ENCODE measurements at regions of chr7 and their contacts with region 1.

Region 1: GRCh38 chr7:100342765-100343164 is 15.2 kb upstream of the PILRB start:
- DNase-seq: peak in 1 of 5 donors; percentile 41
- ATAC-seq: peak in 3 of 4 donors; percentile 45 to 68 (median 57)
- H3K4me3 ChIP-seq: no peak overlapping the region
- H3K27ac ChIP-seq: peak overlapping the region in 6 of 12 donors; percentile 7 to 51 (median 32)
- H3K4me1 ChIP-seq: peaks cover 0 to 23% (median 13%) of the 10 kb centered on the region in 12 donors
- H3K27me3 ChIP-seq: no peaks in the 10 kb centered on the region
- CTCF ChIP-seq: no peak
- POLR2A ChIP-seq: no peak

Region 2: DNA sequence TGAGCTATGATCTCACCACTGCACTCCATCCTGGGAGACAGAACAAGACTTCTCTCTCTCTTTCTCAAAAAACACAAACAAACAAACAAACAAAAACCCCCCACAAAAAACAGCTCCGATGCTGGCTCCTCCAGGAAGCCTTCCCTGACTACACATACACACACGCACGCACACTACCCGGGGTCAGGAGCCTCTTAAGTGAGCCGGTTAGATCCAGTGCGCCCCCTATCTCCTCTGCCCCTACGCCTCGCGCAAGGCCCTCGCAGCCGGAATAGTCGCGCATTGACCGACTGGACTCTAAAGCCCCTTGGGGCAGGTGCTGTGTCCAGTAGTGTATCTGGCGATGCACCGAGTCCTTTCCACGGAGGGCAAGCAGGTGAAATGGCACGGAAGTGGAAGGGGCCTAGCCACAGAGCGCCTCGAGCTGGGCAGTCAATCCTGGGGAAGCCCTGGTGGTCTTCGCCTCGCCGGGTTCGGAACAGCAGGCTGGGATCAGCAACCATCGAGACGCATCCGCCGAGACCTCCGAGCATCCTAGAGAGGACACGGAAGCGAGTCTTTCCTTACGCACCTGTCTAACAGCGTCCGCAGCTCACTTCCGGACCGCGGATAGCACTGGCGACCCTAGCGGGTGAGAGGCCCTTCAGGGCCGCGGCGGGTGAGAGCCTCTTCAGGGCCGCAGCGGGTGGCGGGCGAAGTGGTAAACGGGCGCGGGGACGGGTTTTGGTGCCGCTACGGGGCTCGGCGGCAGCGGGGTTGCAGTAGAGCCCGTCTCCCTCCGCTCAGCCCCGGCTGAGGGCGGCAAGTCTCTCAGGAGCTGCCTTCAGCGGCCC is 726.2 kb before region 1 on chr7 and contains the start of gene ZSCAN25:
- intact Hi-C with region 1: no loop called
- DNase-seq: peak; percentile 83 to 93 (median 93)
- ATAC-seq: peak; percentile 98
- H3K4me3 ChIP-seq: peak within 1 kb of the TSS; percentile 74 to 99 (median 95)
- H3K27ac ChIP-seq: peak within 1 kb of the TSS; percentile 43 to 93 (median 86)
- H3K4me1 ChIP-seq: peaks cover 0 to 17% (median 11%) of the 10 kb centered on the region in 12 donors
- H3K27me3 ChIP-seq: no peaks in the 10 kb centered on the region
- CTCF ChIP-seq: peak in 11 of 12 donors; percentile 12 to 48 (median 43)
- POLR2A ChIP-seq: peak in 1 of 2 donors; percentile 78
- total RNA-seq, gene ZSCAN25: 5.6 to 12.0 (median 8.3) TPM

Region 3: DNA sequence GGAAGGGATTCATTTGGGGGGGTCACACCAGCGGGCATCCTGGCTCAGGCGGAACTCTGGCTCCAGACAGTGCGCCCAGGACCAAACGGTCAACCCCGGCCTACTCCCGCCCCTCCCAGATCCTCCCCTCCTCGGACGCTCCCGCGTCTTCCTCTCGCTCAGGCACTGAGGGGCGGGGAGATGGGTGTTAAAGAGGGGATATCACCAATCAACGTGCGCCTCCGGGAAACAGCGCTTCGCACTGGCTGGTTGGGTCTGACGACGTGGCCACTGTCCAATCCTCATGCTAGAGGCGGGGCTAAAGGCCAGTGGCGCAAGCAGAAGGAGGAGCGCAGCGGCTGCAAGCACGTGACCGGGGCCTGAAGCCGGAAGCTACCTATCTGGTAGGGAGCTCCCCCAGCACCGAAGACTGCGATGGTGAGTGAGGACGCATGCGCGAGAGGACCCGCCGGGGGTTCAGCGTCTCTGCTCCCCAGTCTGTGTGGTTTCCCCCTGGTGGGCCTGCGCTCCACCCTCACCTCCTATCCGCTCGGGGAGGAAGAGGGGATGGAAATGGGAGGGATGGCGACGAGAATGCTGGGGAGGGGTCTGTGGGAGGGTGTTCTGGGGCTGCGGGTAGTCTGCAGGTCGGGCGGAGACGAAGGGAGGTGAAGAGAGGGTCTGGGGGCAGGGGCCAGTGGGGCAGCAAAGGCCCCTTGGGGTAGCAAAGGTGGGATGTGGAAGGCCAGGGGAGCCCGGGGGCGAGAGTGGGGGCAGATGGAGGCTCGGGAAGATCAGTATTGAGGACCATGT is 194.0 kb before region 1 on chr7 and contains the start of gene LAMTOR4:
- intact Hi-C with region 1: loop called in 1 of 10 experiments (anchors 10 kb)
- DNase-seq: peak; percentile 99 to 100 (median 99)
- ATAC-seq: peak; percentile 99 to 100 (median 100)
- H3K4me3 ChIP-seq: peak within 1 kb of the TSS; percentile 61 to 97 (median 81)
- H3K27ac ChIP-seq: peak within 1 kb of the TSS; percentile 67 to 89 (median 84)
- H3K4me1 ChIP-seq: peaks cover 0 to 50% (median 12%) of the 10 kb centered on the region in 12 donors
- H3K27me3 ChIP-seq: no peaks in the 10 kb centered on the region
- CTCF ChIP-seq: no peak
- POLR2A ChIP-seq: peak in 1 of 2 donors; percentile 94
- total RNA-seq, gene LAMTOR4: 64.6 to 160 (median 91.7) TPM